Activated CD8-positive, alpha-beta T cell treated with anti-CD3 and anti-CD28 coated beads, Interleukin-2, amount 10 ng/mL, durations not matched to agents 7 days and 5 days (primary cell): ENCODE measurements at regions of chr13 and their contacts with region 1.

Region 1: GRCh38 chr13:46149272-46150133 is 32.5 kb downstream of the LCP1 start:
- DNase-seq: no peak
- ATAC-seq: peak; percentile 23
- H3K4me3 Mint-ChIP-seq: no peak overlapping the region
- H3K27ac Mint-ChIP-seq: peak overlapping the region; percentile 75
- H3K4me1 Mint-ChIP-seq: peaks cover 29% of the 10 kb centered on the region
- H3K27me3 Mint-ChIP-seq: no peaks in the 10 kb centered on the region

Region 2: DNA sequence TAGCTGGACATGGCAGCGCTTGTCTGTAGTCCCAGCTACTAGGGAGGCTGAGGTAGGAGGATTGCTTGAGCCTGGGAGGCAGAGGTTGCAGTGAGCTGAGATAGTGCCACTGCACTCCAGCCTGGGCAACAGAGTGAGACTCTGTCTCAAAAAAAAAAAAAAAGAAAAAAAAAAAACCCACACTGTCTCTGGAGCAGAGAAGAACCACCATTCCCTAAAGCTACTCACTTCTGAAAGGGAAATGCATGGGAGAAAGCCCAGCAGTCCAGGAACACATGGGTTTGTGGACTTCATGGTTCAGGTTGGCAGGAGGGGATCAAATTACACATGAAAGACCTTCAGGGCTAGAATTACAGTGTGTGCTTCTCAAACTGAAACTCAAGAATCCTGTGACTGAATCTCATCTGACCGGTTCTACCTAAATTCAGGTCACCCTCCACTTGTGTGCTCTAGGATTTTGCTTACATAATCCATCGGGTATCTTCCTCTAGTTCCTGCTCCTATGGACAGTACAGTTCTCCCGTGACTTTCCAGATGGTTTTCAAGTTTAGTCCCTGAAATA is 14.5 kb before region 1 on chr13:
- CTCF ChIA-PET with region 1: interaction called, 12 read pairs
- POLR2A ChIA-PET with region 1: no interaction called
- DNase-seq: no peak
- ATAC-seq: no peak
- H3K4me3 Mint-ChIP-seq: no peak overlapping the region
- H3K27ac Mint-ChIP-seq: peak overlapping the region; percentile 70
- H3K4me1 Mint-ChIP-seq: peaks cover 26% of the 10 kb centered on the region
- H3K27me3 Mint-ChIP-seq: no peaks in the 10 kb centered on the region

Region 3: GRCh38 chr13:46184277-46184699 is 34.8 kb after region 1 on chr13:
- CTCF ChIA-PET with region 1: no interaction called
- POLR2A ChIA-PET with region 1: no interaction called
- DNase-seq: peak; percentile 89
- ATAC-seq: peak; percentile 66
- H3K4me3 Mint-ChIP-seq: peak overlapping the region; percentile 90
- H3K27ac Mint-ChIP-seq: peak overlapping the region; percentile 98
- H3K4me1 Mint-ChIP-seq: peaks cover 38% of the 10 kb centered on the region
- H3K27me3 Mint-ChIP-seq: no peaks in the 10 kb centered on the region